Pancreas (tissue), 10 donors: ENCODE measurements at regions of chr11 and their contacts with region 1.

Region 1: DNA sequence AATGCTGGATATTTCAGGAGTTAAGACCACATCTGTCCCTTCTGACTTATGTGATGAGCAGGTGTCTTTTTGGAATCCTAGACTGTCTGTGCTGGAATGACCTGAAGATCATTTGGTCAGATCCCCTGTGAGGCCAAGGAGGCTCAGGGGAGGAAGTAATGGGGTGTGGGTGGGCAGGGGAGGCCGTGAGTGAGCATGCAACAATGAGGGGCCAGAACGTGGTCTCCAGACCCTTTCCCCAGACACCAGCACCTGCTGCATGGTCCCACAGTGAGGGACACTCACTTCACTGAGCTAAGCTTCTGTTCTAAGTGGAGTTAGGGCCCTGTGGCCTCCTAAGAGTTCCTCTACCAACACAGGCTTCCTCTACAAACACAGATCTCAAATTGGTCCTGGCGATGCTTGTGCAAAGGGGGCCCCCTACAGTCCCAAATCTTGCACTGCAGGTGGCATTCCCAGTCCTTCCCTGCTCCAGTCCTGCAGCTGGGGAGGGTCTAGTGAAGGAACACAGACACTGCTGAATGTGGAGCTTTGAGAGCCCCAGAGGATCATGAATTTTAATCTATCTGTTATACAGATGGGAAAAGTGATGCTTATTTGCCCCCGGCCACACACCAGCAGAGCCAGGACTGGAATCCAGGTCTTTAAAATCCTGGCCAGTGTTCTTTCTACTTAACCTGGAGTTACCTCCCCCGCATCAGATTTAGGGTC is 7.4 kb downstream of the USP2 start:
- DNase-seq: peak; percentile 67 to 90 (median 86)
- ATAC-seq: peak; percentile 39 to 76 (median 68)
- H3K4me3 ChIP-seq: no peak overlapping the region
- H3K27ac ChIP-seq: no peak overlapping the region
- H3K4me1 ChIP-seq: peaks cover 9 to 30% (median 21%) of the 10 kb centered on the region in 3 donors
- H3K27me3 ChIP-seq: no peaks in the 10 kb centered on the region
- CTCF ChIP-seq: peak; percentile 90 to 94 (median 92)

Region 2: DNA sequence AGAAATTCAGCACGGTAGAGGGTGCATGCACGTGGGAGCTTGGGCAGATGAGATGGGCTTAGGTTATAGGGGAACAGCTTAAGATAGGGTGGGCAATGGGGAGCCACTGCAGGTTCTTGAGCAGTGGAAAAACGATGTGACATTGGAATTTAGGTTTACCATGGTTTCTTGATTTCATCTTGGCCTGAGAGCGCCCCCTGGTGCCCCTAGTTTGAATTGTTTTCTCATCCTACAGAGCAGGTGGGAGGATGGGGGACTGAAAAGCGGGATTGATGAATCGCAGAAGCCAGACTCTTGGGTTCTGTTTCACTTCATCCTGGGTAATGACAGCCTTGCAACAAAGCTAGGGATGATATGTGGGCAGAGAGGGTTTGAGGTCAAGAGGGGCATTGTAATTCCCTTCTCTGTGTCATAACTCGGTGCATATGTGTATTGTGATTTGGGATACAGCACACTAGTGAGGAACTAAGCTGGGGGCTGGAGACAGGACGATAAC is 50.5 kb before region 1 on chr11:
- intact Hi-C with region 1: loop called in 1 of 3 experiments (anchors 10 kb)
- DNase-seq: peak in 5 of 6 donors; percentile 43 to 81 (median 66)
- ATAC-seq: peak in 2 of 4 donors; percentile 23 to 25
- H3K4me3 ChIP-seq: no peak overlapping the region
- H3K27ac ChIP-seq: no peak overlapping the region
- H3K4me1 ChIP-seq: no peaks in the 10 kb centered on the region
- H3K27me3 ChIP-seq: no peaks in the 10 kb centered on the region
- CTCF ChIP-seq: peak; percentile 61 to 77 (median 72)

Region 3: GRCh38 chr11:119338318-119338907 is 35.7 kb before region 1 on chr11:
- intact Hi-C with region 1: loop called in 1 of 3 experiments (anchors 5 kb)
- DNase-seq: peak in 4 of 6 donors; percentile 52 to 71 (median 62)
- ATAC-seq: peak in 3 of 4 donors; percentile 30 to 42 (median 38)
- H3K4me3 ChIP-seq: no peak overlapping the region
- H3K27ac ChIP-seq: no peak overlapping the region
- H3K4me1 ChIP-seq: peaks cover 4 to 25% (median 16%) of the 10 kb centered on the region in 3 donors
- H3K27me3 ChIP-seq: no peaks in the 10 kb centered on the region
- CTCF ChIP-seq: peak; percentile 47 to 71 (median 58)

Region 4: DNA sequence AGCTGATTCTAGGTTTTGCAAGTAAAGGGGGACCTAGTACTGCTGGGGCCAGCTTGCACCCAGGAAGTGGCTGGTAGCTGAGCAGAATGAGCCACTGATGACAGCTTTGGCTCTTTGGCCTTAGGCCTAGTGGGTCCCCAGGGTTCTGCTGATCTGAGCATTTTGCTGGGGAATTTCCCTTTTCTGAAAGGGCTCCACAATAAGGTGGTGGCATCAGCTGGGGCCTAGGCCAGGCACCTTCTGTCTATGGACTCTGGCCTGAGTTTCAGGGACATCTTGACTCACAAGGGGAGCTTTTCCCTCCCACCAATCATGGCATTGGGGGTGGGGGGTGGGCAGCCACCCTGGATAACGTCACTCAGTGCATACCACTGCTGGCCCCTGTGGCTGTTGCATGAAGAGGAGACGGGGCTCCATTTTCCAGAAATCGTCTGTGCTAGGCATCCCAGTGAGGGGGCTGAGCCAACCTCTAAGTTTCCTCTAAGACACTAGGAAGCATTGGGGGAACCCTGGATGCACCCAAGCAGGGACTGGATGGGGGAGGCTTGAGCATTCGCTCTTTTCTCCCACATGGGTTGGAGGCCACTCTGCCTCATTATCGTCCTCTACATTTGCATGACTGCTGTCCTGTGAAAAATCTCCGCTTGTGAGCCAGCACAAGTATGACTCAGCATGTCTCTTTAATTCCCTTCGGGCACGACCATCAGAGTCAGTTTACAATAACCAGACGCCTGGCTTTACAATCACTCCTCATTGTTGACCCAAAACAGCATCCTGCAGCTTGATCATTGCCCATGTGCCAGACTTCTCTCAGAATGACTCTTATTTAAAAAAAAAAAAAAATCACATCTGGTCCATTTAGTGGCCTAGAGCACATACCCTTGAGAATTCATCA is 193.9 kb after region 1 on chr11:
- intact Hi-C with region 1: no loop called
- DNase-seq: no peak
- ATAC-seq: peak in 2 of 4 donors; percentile 31 to 35
- H3K4me3 ChIP-seq: no peak overlapping the region
- H3K27ac ChIP-seq: no peak overlapping the region
- H3K4me1 ChIP-seq: no peaks in the 10 kb centered on the region
- H3K27me3 ChIP-seq: no peaks in the 10 kb centered on the region
- CTCF ChIP-seq: no peak